Gastrocnemius medialis (tissue), 4 donors: ENCODE measurements at regions of chr4 and their contacts with region 1.

Region 1: DNA sequence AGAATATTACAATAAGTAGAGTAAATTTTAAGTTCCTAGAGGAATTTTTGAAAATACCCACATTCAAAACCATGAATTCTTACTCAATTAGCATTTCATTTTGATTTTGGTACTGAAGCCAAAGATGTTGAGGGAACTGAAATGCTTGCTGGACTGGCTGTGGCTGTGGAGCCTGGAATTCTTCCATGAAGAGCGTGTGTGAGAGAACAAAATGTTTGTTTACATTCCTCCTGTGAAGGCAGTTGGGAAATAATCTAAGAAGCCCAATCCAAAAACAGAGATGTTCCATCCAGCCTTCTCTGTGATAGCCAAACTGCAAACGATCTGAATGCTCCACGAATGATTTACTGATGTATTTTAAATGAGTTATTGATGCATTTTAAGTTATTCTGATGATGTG is 3.8 kb upstream of the ADH1B start:
- DNase-seq: peak; percentile 81 to 82
- ATAC-seq: peak; percentile 83 to 87
- H3K4me3 ChIP-seq: no peak overlapping the region
- H3K27ac ChIP-seq: peak overlapping the region; percentile 88 to 93 (median 92)
- H3K4me1 ChIP-seq: peaks cover 34% of the 10 kb centered on the region in 2 donors
- H3K27me3 ChIP-seq: no peaks in the 10 kb centered on the region
- CTCF ChIP-seq: no peak
- POLR2A ChIP-seq: no peak

Region 2: GRCh38 chr4:98305576-98305975 is 1019.4 kb before region 1 on chr4:
- in situ Hi-C with region 1: no loop called
- intact Hi-C with region 1: no loop called
- DNase-seq: no peak
- ATAC-seq: no peak
- H3K4me3 ChIP-seq: no peak overlapping the region
- H3K27ac ChIP-seq: no peak overlapping the region
- H3K4me1 ChIP-seq: no peaks in the 10 kb centered on the region
- H3K27me3 ChIP-seq: no peaks in the 10 kb centered on the region
- CTCF ChIP-seq: no peak
- POLR2A ChIP-seq: no peak

Region 3: DNA sequence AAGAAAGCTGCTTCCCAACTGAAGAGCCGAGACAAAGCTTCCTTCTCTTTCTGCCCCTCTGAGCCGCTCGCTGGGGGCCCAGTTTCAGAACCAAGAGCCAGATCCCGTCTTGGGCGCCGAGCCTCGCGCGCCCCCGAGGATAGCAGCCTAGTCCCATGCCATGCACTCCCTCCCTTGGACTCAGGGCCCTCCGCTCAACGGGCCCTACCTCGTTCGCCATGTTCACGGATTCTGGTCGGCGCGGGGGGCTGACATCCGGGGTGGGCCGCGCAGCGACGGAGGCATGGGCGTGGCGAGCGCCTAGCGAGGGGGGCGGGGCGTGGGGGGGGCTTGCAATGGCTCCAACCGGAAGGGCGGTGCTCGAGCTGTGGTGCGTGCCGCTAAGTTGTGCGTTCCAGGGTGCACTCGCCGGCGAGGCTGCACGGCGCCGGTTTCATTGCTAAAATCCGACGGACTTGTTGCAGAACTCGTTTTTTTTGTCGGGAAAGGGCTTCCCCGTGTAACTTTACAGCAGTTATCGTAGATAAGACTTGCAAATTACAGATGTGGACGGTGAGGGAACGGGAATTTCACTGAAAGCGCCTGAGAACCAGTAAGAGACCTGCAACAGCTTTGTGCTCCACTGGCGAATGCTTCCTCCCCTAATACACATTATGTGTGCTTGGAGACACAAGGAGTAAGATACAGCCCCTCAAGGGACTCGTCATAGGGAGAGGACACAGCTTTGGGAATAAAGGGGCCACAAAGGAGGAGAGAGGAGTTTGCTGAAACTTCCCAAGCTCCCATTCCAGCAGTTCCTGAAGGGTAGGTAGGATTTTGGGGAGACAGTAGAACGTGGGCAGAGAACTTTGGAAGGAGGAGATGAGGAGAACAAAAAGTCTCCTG is 236.3 kb before region 1 on chr4 and contains the start of gene ADH5:
- in situ Hi-C with region 1: no loop called
- intact Hi-C with region 1: loop called (anchors 1 kb)
- DNase-seq: peak; percentile 79 to 87
- ATAC-seq: peak; percentile 84 to 85
- H3K4me3 ChIP-seq: peak within 1 kb of the TSS; percentile 70 to 92 (median 73)
- H3K27ac ChIP-seq: peak within 1 kb of the TSS; percentile 87 to 97 (median 93)
- H3K4me1 ChIP-seq: peaks cover 0 to 23% of the 10 kb centered on the region in 2 donors
- H3K27me3 ChIP-seq: no peaks in the 10 kb centered on the region
- CTCF ChIP-seq: no peak
- POLR2A ChIP-seq: peak; percentile 86 to 87
- total RNA-seq, gene ADH5: 55.2 to 101 (median 72.6) TPM

Region 4: DNA sequence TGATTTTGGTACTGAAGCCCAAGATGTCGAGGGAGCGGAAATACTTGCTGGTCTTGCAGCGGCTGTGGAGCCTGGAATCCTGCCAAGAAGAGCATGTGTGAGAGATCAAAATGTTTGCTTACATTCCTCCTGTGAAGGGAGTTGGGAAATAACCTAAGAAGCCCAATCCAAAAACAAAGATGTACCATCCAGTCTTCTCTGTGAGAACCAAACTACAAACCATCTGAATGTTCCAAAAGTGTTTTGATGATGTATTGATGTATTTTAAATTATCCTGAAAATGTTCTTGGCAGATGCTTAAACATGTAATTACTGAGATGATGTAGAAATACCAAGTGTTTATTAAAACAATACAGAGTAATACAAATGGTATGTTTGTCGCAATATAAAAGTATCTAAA is 24.0 kb before region 1 on chr4:
- in situ Hi-C with region 1: no loop called
- intact Hi-C with region 1: loop called (anchors 2 kb)
- DNase-seq: peak; percentile 79 to 84
- ATAC-seq: peak; percentile 90 to 96
- H3K4me3 ChIP-seq: no peak overlapping the region
- H3K27ac ChIP-seq: peak overlapping the region; percentile 56 to 69 (median 60)
- H3K4me1 ChIP-seq: peaks cover 10 to 16% of the 10 kb centered on the region in 2 donors
- H3K27me3 ChIP-seq: no peaks in the 10 kb centered on the region
- CTCF ChIP-seq: no peak
- POLR2A ChIP-seq: no peak

Region 5: GRCh38 chr4:99655308-99656081 is 330.5 kb after region 1 on chr4:
- in situ Hi-C with region 1: no loop called
- intact Hi-C with region 1: loop called (anchors 5 kb)
- DNase-seq: peak; percentile 78 to 80
- ATAC-seq: peak; percentile 14 to 50
- H3K4me3 ChIP-seq: peak overlapping the region; percentile 62 to 75 (median 62)
- H3K27ac ChIP-seq: peak overlapping the region; percentile 94 to 99 (median 98)
- H3K4me1 ChIP-seq: peaks cover 47 to 55% of the 10 kb centered on the region in 2 donors
- H3K27me3 ChIP-seq: no peaks in the 10 kb centered on the region
- CTCF ChIP-seq: no peak
- POLR2A ChIP-seq: peak in 1 of 2 donors; percentile 30

Region 6: GRCh38 chr4:99949034-99949998 is 624.3 kb after region 1 on chr4:
- in situ Hi-C with region 1: no loop called
- intact Hi-C with region 1: loop called (anchors 5 kb)
- DNase-seq: peak; percentile 81 to 89
- ATAC-seq: peak; percentile 56 to 67
- H3K4me3 ChIP-seq: peak overlapping the region; percentile 79 to 95 (median 86)
- H3K27ac ChIP-seq: peak overlapping the region; percentile 96 to 98 (median 98)
- H3K4me1 ChIP-seq: peaks cover 30 to 40% of the 10 kb centered on the region in 2 donors
- H3K27me3 ChIP-seq: no peaks in the 10 kb centered on the region
- CTCF ChIP-seq: peak; percentile 73 to 93 (median 80)
- POLR2A ChIP-seq: no peak